ENCODE measurements at regions of chr1 and their contacts with region 1.

Region 1: DNA sequence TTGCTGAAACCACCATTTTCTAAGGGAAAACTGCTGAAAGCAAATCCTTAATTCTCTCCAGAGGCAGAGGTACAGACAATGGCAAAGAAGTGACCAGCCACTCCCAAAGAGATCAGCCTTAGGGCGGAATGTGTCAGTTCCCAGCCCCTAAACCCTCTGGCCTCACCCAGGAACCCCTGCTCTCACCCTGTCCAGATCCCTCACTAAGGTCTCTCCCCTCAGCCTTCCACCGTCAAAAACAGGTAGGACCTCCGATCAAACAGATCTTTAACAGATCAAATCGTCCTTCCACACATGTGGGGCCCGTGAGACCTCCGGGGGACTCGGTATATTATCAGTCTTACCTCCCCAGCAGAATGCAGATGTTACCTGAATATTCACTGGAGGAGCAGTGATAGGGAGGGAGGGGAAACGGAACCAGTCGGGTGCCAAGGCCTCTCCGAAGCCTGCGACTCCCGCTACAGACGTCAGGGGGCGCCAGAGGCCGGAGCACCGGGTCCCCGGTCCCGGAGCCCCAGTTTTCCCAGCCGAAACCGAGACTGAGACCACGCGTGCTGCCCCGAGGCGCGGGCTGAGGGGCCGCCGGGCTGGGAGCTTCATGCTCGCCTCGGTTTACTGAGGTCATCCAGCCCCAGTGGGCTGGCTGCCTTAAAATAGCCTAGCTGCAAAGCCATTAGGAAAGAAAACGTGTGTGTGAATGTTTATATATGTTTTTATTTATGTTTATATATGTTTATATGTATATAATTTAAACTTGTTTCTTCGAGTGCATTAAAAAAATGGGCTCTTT is 23.6 kb downstream of the GPA33 start:
- DNase-seq: peak; percentile 83
- H3K4me3 ChIP-seq: peak overlapping the region; percentile 21
- H3K27ac ChIP-seq: no peak overlapping the region
- H3K4me1 ChIP-seq: no peaks in the 10 kb centered on the region
- H3K27me3 ChIP-seq: no peaks in the 10 kb centered on the region
- CTCF ChIP-seq: peak; percentile 95

Region 2: GRCh38 chr1:166975361-166976129 is 91.0 kb before region 1 on chr1 and contains the start of gene ILDR2:
- CTCF ChIA-PET with region 1: no interaction called
- POLR2A ChIA-PET with region 1: no interaction called
- intact Hi-C with region 1: no loop called
- DNase-seq: peak; percentile 48
- H3K4me3 ChIP-seq: peak within 1 kb of the TSS; percentile 46
- H3K27ac ChIP-seq: no peak within 1 kb of the TSS
- H3K4me1 ChIP-seq: no peaks in the 10 kb centered on the region
- H3K27me3 ChIP-seq: peaks cover 96% of the 10 kb centered on the region
- CTCF ChIP-seq: no peak
- total RNA-seq, gene ILDR2: not detected in 2 replicates

Region 3: GRCh38 chr1:167043752-167044488 is 22.6 kb before region 1 on chr1:
- CTCF ChIA-PET with region 1: no interaction called
- POLR2A ChIA-PET with region 1: no interaction called
- intact Hi-C with region 1: no loop called
- DNase-seq: peak; percentile 40
- H3K4me3 ChIP-seq: peak overlapping the region; percentile 23
- H3K27ac ChIP-seq: no peak overlapping the region
- H3K4me1 ChIP-seq: peaks cover 6% of the 10 kb centered on the region
- H3K27me3 ChIP-seq: peaks cover 91% of the 10 kb centered on the region
- CTCF ChIP-seq: no peak

Region 4: DNA sequence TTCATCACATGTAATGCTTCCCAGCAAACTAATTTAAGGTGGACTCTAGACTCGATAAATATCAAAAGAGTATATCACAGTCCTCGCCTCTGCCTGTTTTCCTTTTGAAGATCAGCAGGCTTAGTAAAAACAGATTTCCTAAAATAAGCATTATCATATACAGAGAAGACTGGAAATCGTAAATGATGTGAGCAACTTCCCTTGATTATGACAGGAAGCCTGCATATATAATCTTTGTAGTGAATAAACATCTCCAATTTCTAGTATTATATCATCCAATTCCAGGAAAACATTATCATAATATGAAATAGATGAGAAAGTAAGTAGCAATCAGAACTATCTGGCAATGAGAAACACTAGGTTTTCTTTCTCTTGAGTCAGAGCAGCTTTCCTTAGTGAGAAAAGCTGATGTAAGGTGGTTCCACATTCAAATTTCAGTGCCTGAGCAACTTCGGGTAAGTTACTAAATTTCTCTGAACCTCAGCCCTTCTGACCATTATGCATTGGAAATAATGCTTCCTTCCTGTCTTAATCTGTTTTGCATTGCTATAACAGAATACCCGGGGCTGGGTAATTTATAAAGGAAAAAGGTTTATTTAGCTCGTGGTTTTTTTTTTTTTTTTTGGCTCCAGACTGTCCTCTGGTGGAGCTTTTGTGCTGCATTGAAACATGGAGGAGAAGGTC is 141.6 kb after region 1 on chr1:
- CTCF ChIA-PET with region 1: interaction called, 10 read pairs
- POLR2A ChIA-PET with region 1: interaction called, 3 read pairs
- intact Hi-C with region 1: no loop called
- DNase-seq: peak; percentile 77
- H3K4me3 ChIP-seq: no peak overlapping the region
- H3K27ac ChIP-seq: peak overlapping the region; percentile 47
- H3K4me1 ChIP-seq: peaks cover 16% of the 10 kb centered on the region
- H3K27me3 ChIP-seq: no peaks in the 10 kb centered on the region
- CTCF ChIP-seq: peak; percentile 57

Region 5: DNA sequence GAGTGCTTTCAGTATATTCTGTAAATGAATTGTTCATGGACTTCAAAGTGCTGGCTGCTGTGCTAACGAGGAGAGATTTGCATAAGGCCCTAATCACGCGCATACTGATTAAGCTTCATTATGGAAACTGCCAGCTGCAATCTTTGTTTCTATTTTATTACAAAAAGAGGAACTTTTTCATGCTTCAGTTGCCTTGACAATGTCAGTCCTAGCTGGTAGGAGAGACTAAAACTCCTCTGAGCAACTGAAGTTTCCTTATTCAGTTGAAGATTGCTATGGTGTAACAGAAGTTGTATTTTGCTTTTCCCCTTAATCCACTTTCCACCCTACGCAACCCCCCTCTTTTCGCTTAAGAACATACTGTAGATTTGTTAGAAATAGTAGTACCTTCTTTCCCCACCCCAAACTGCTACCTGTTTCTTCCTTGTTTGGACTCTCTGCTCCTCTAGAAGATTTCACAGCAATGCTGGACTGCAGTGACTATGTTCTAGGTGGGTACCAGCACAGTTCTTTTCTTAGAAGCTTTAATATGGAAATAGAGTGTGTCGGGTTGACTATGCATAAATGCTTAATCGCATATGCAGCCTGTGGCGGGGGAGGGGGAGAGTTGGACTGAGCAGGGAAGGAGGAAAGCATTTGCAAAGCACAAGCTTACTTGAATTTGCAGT is 262.4 kb after region 1 on chr1:
- CTCF ChIA-PET with region 1: no interaction called
- POLR2A ChIA-PET with region 1: no interaction called
- intact Hi-C with region 1: no loop called
- DNase-seq: peak; percentile 79
- H3K4me3 ChIP-seq: peak overlapping the region; percentile 24
- H3K27ac ChIP-seq: peak overlapping the region; percentile 63
- H3K4me1 ChIP-seq: peaks cover 33% of the 10 kb centered on the region
- H3K27me3 ChIP-seq: no peaks in the 10 kb centered on the region
- CTCF ChIP-seq: no peak

Region 6: GRCh38 chr1:167442124-167442848 is 375.8 kb after region 1 on chr1:
- CTCF ChIA-PET with region 1: no interaction called
- POLR2A ChIA-PET with region 1: no interaction called
- intact Hi-C with region 1: loop called (anchors 1 kb)
- DNase-seq: peak; percentile 87
- H3K4me3 ChIP-seq: no peak overlapping the region
- H3K27ac ChIP-seq: no peak overlapping the region
- H3K4me1 ChIP-seq: peaks cover 4% of the 10 kb centered on the region
- H3K27me3 ChIP-seq: no peaks in the 10 kb centered on the region
- CTCF ChIP-seq: peak; percentile 86

Region 7: DNA sequence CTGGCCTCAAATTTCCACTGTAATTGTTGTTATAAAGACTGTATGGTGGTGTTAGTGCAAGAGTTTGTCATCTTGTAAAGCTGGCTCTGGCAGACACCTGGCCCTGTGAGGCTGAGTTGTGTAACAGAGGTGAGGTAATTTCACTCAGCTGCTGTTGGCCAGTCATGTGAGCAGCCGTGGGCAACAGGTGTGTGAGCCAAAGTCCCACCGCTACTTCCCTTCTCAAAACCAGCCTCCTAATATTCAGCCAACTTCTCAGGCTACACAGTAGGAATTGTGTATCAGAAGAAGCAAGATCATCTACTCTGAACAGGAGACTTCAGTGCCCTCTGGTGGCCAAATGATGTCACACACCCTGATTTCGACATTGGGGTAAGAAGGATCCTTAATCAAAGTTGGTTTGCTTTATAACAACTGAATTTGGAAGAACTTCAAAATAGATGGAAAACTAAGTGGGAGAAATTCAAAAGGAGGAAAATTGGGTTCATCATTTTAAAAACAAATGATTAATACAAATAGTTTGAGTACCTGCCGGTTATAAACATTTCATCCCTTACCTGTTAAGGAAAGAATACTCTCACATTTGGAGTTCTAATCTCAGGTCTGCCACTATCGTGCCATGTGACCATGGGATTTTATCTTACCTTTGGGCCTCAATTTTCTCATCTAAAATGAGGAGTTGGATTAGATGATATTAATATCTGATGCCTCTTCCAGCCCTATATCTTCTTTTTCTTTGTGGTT is 489.6 kb after region 1 on chr1:
- CTCF ChIA-PET with region 1: no interaction called
- POLR2A ChIA-PET with region 1: no interaction called
- intact Hi-C with region 1: loop called (anchors 1 kb)
- DNase-seq: peak; percentile 80
- H3K4me3 ChIP-seq: no peak overlapping the region
- H3K27ac ChIP-seq: no peak overlapping the region
- H3K4me1 ChIP-seq: peaks cover 10% of the 10 kb centered on the region
- H3K27me3 ChIP-seq: no peaks in the 10 kb centered on the region
- CTCF ChIP-seq: peak; percentile 91